Mammary epithelial cell (primary cell): ENCODE measurements at regions of chr5 and their contacts with region 1.

Region 1: GRCh38 chr5:132386644-132387286 is 17.3 kb downstream of the SLC22A5 start:
- DNase-seq: peak; percentile 58
- H3K4me3 ChIP-seq: no peak overlapping the region
- H3K27ac ChIP-seq: no peak overlapping the region
- H3K4me1 ChIP-seq: peaks cover 47% of the 10 kb centered on the region
- H3K27me3 ChIP-seq: no peaks in the 10 kb centered on the region
- CTCF ChIP-seq: peak; percentile 75 to 84

Region 2: DNA sequence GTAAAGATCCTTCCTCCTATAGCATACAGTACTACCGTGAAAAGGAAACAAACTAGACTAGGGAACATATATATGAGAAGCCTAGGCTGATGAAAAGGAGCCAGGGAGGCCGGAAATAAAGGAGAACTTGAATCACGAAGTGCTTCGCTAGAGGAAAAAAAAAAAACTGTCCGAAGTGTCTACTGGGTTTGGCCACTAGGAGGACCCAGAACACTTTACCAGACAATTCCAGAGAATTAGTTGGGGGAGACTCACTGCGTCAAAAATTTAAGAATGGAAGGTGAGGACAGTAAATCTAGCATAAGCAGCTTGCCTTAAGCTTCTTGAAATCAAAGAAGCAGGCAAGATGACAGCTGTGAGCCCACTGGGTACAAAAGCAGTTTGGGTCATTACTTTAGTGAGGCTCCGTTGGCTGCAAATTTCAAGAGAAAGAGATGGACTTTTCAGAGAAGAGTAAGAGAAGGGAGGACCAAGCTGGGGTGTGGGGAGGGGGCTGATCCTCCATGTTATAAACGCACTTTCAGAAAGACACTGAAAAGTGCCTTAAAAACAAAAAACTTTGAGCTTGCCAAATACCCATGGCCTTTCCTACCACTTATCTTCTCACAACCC is 206.5 kb before region 1 on chr5:
- CTCF ChIA-PET with region 1: no interaction called
- dilution Hi-C with region 1: no loop called
- in situ Hi-C with region 1: no loop called
- intact Hi-C with region 1: loop called (anchors 1 kb)
- DNase-seq: peak; percentile 63
- H3K4me3 ChIP-seq: no peak overlapping the region
- H3K27ac ChIP-seq: no peak overlapping the region
- H3K4me1 ChIP-seq: peaks cover 22% of the 10 kb centered on the region
- H3K27me3 ChIP-seq: no peaks in the 10 kb centered on the region
- CTCF ChIP-seq: peak; percentile 79 to 87

Region 3: DNA sequence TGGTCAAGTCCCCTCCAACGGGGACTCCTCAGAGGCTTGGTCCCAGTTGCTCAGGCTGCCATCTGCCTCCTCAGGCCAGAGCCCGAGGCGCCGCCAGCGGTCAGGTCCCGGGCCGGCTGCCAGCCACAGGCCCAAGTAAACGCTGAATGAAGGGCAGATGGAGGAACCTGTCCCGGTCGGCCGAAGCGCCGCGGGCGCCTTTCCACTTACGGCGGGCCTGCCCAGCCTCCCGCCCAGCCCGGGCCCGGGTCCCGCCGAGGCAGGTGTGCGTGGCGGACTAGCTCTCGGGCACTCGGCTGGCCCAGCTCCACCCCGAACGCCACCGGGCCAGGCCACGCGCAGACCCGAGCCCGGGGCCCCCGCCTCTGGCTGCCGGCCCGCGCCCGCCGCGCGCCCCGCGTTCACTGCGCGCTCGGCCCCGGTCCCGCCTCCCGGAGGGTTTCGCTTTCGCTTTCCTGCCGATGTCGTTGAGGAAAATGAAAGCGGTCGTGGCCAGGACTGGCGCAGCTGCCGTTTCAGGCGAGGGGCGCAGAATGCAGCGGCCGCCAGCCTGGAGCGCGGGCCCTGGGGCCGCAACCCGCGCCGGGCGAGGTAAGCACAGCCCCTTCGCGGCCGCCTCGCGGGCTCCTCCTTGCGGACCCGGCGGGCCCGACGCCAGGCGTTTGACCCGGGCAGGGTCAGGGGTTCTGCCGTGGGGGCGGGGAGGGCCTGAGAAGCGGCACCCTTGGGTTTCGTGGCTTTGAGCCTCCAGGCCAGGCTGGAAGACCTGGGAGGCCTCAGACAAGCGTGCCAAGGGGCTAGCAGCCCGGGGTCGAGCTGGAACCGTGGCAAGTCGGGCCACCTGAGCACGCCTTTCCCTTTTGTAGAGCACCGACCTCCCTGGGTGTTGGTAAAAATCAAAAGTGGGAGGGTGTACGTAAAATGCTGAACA is 24.0 kb after region 1 on chr5:
- CTCF ChIA-PET with region 1: interaction called, 3 read pairs
- dilution Hi-C with region 1: no loop called
- in situ Hi-C with region 1: no loop called
- intact Hi-C with region 1: loop called (anchors 1 kb)
- DNase-seq: no peak
- H3K4me3 ChIP-seq: peak overlapping the region; percentile 47 to 73 (median 68)
- H3K27ac ChIP-seq: peak overlapping the region; percentile 41
- H3K4me1 ChIP-seq: peaks cover 24% of the 10 kb centered on the region
- H3K27me3 ChIP-seq: no peaks in the 10 kb centered on the region
- CTCF ChIP-seq: peak; percentile 26 to 76

Region 4: GRCh38 chr5:132456296-132457001 is 69.7 kb after region 1 on chr5:
- CTCF ChIA-PET with region 1: no interaction called
- dilution Hi-C with region 1: no loop called
- in situ Hi-C with region 1: no loop called
- intact Hi-C with region 1: loop called (anchors 2 kb)
- DNase-seq: no peak
- H3K4me3 ChIP-seq: no peak overlapping the region
- H3K27ac ChIP-seq: no peak overlapping the region
- H3K4me1 ChIP-seq: peaks cover 43% of the 10 kb centered on the region
- H3K27me3 ChIP-seq: no peaks in the 10 kb centered on the region
- CTCF ChIP-seq: no peak

Region 5: DNA sequence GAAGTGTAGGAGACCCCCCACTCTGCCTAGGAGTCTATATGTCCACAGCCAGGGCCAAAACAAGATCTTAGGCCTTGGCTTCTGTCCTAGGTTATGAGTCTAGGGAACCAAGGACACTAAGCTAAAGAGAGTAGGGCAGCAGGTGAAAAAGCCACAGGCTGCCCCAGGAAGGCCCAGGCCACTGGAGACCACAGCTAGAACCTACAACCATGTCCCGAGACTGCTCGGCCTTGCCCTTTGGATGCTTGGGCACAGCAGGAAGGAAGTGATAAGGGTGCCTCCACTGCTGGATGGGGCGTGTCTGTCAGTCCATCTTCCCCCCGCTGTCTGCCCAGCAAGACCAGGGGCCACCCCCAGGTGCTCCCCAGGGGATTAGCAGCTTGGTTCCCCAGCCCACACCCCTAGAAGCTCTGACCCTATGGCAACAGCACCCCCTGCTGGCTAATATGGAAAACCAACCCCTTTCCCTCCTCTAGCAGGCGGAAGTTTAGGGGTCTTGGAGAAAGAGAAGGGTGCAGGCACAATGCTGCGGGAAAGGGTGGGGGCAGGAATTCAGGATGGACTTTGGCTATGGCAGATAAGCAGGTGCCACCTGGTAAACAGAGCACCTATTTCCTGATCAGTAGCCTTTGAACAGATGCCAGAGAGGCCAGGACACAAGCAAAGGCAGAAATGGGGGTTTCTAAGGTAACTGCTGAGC is 114.3 kb after region 1 on chr5:
- CTCF ChIA-PET with region 1: no interaction called
- dilution Hi-C with region 1: no loop called
- in situ Hi-C with region 1: loop called (anchors 10 kb)
- intact Hi-C with region 1: loop called (anchors 1 kb)
- DNase-seq: no peak
- H3K4me3 ChIP-seq: no peak overlapping the region
- H3K27ac ChIP-seq: no peak overlapping the region
- H3K4me1 ChIP-seq: peaks cover 19% of the 10 kb centered on the region
- H3K27me3 ChIP-seq: no peaks in the 10 kb centered on the region
- CTCF ChIP-seq: peak; percentile 75 to 85

Region 6: DNA sequence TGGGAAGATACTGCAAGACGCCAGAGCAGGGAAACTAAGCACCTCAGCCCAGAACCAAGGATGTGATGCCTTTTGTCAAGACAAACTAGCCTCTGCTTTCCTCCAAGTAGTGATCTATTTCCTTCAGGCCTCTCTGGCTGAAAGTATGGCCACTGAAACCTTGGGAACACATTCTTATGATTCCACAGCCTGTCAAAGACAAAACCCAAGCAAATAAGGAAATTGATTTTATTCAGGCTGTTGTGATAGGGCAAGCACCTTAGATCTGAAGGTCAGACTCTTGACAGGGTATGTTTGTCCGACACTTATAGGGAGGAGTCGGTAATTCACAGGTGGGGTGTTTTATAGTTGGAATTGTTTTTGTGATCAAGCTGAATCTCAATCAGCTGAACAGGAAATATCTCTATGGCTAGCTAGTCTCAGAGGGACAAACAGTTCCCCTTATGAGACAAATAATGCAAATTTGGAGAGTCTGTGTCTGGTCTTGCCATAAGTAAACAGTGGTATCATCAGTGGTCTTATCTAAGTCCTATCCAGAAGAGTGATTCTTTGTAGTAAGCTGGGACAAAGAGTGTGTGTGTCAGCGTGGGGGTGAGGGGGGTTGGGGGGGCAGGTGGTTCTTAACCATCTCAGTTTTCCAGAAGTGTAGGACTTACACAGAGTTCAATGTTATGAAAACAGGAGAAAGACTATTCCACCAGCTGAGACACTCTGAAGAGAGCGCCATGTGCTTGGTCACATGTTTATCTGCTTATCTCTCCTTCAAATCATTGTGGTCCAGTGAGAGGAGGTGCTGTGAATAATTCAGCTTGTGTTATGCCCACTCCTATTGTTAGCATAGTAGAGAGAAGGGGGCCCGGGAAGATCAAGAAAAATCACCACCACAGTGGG is 646.3 kb after region 1 on chr5:
- CTCF ChIA-PET with region 1: no interaction called
- dilution Hi-C with region 1: no loop called
- in situ Hi-C with region 1: no loop called
- intact Hi-C with region 1: no loop called
- DNase-seq: no peak
- H3K4me3 ChIP-seq: no peak overlapping the region
- H3K27ac ChIP-seq: no peak overlapping the region
- H3K4me1 ChIP-seq: no peaks in the 10 kb centered on the region
- H3K27me3 ChIP-seq: no peaks in the 10 kb centered on the region
- CTCF ChIP-seq: no peak